ENCODE measurements at regions of chr2 and their contacts with region 1.

Region 1: GRCh38 chr2:27281855-27282559 is at the start of gene TRIM54:
- DNase-seq: no peak
- ATAC-seq: no peak
- H3K4me3 ChIP-seq: no peak within 1 kb of the TSS
- H3K27ac ChIP-seq: no peak within 1 kb of the TSS
- H3K4me1 ChIP-seq: no peaks in the 10 kb centered on the region
- H3K27me3 ChIP-seq: peaks cover 0 to 6% of the 10 kb centered on the region in 2 experiments; a peak in 2 of 4 replicates
- CTCF ChIP-seq: no peak
- EP300 ChIP-seq: no peak
- POLR2A ChIP-seq: no peak
- RAD21 ChIP-seq: no peak
- polyA plus RNA-seq, gene TRIM54: not detected

Region 2: GRCh38 chr2:26959331-26959730 is 322.7 kb before region 1 on chr2:
- CTCF ChIA-PET with region 1: interaction called, 46 read pairs
- POLR2A ChIA-PET with region 1: no interaction called
- RAD21 ChIA-PET with region 1: interaction called, 23 read pairs
- SMC1A ChIA-PET with region 1: interaction called, 21 read pairs
- in situ Hi-C with region 1: loop called (anchors 5 kb)
- intact Hi-C with region 1: loop called (anchors 2 kb)
- DNase-seq: no peak
- ATAC-seq: no peak
- H3K4me3 ChIP-seq: no peak overlapping the region
- H3K27ac ChIP-seq: no peak overlapping the region
- H3K4me1 ChIP-seq: no peaks in the 10 kb centered on the region
- H3K27me3 ChIP-seq: no peaks in the 10 kb centered on the region; a peak in 2 of 4 replicates
- CTCF ChIP-seq: no peak
- EP300 ChIP-seq: no peak
- POLR2A ChIP-seq: no peak
- RAD21 ChIP-seq: no peak

Region 3: GRCh38 chr2:27086090-27086723 is 195.8 kb before region 1 on chr2:
- CTCF ChIA-PET with region 1: interaction called, 21 read pairs
- POLR2A ChIA-PET with region 1: no interaction called
- RAD21 ChIA-PET with region 1: interaction called, 3 read pairs
- SMC1A ChIA-PET with region 1: interaction called, 5 read pairs
- in situ Hi-C with region 1: no loop called
- intact Hi-C with region 1: no loop called
- DNase-seq: peak; percentile 73
- ATAC-seq: peak; percentile 92
- H3K4me3 ChIP-seq: peak overlapping the region; percentile 85
- H3K27ac ChIP-seq: peak overlapping the region; percentile 67
- H3K4me1 ChIP-seq: peaks cover 19% of the 10 kb centered on the region
- H3K27me3 ChIP-seq: no peaks in the 10 kb centered on the region
- CTCF ChIP-seq: peak; percentile 77 to 95 (median 83)
- EP300 ChIP-seq: no peak
- POLR2A ChIP-seq: peak; percentile 80
- RAD21 ChIP-seq: peak; percentile 47

Region 4: DNA sequence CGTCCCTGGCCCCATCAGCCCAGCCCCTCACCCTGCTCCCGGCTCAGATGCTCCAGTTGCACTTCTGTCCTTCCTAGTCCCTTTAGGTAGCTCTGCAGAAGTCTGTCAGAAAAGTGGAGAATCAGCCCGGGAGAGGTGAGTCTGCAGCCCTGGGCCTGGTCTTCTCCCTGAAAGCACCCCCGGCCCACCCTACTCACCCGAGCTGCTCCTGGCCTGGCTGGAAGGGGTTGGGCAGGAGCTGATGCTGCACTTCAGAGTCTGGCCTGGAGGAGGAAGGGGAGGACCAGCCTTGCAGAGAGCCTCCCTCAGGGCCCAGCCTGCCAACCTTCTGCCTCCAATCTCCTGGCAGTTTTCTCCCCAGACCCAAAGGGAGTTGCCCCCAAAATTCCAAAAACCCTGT is 179.7 kb before region 1 on chr2:
- CTCF ChIA-PET with region 1: interaction called, 132 read pairs
- POLR2A ChIA-PET with region 1: no interaction called
- RAD21 ChIA-PET with region 1: interaction called, 39 read pairs
- SMC1A ChIA-PET with region 1: interaction called, 19 read pairs
- in situ Hi-C with region 1: loop called (anchors 5 kb)
- intact Hi-C with region 1: loop called (anchors 1 kb)
- DNase-seq: no peak
- ATAC-seq: no peak
- H3K4me3 ChIP-seq: no peak overlapping the region
- H3K27ac ChIP-seq: no peak overlapping the region
- H3K4me1 ChIP-seq: no peaks in the 10 kb centered on the region
- H3K27me3 ChIP-seq: no peaks in the 10 kb centered on the region
- CTCF ChIP-seq: no peak
- EP300 ChIP-seq: no peak
- POLR2A ChIP-seq: no peak
- RAD21 ChIP-seq: no peak

Region 5: GRCh38 chr2:27133905-27134780 is 147.9 kb before region 1 on chr2 and contains the start of gene PREB:
- CTCF ChIA-PET with region 1: interaction called, 12 read pairs
- POLR2A ChIA-PET with region 1: no interaction called
- RAD21 ChIA-PET with region 1: interaction called, 13 read pairs
- SMC1A ChIA-PET with region 1: interaction called, 5 read pairs
- in situ Hi-C with region 1: no loop called
- intact Hi-C with region 1: no loop called
- DNase-seq: peak; percentile 88
- ATAC-seq: peak; percentile 98
- H3K4me3 ChIP-seq: peak within 1 kb of the TSS; percentile 97
- H3K27ac ChIP-seq: peak within 1 kb of the TSS; percentile 90
- H3K4me1 ChIP-seq: peaks cover 8% of the 10 kb centered on the region
- H3K27me3 ChIP-seq: no peaks in the 10 kb centered on the region
- CTCF ChIP-seq: peak; percentile 38 to 43 (median 41); a peak in 4 of 6 replicates
- EP300 ChIP-seq: no peak
- POLR2A ChIP-seq: peak; percentile 89
- RAD21 ChIP-seq: peak; percentile 45; the same call in 1 of the 2 replicates
- polyA plus RNA-seq, gene PREB: 26.3 to 45.7 TPM

Region 6: GRCh38 chr2:27249891-27250651 is 31.9 kb before region 1 on chr2:
- CTCF ChIA-PET with region 1: interaction called, 58 read pairs
- POLR2A ChIA-PET with region 1: no interaction called
- RAD21 ChIA-PET with region 1: interaction called, 8 read pairs
- SMC1A ChIA-PET with region 1: interaction called, 12 read pairs
- in situ Hi-C with region 1: no loop called
- intact Hi-C with region 1: no loop called
- DNase-seq: no peak
- ATAC-seq: peak; percentile 88
- H3K4me3 ChIP-seq: no peak overlapping the region
- H3K27ac ChIP-seq: no peak overlapping the region
- H3K4me1 ChIP-seq: no peaks in the 10 kb centered on the region
- H3K27me3 ChIP-seq: peaks cover 2 to 4% of the 10 kb centered on the region in 2 experiments; a peak in 3 of 4 replicates
- CTCF ChIP-seq: peak; percentile 66 to 79 (median 66)
- EP300 ChIP-seq: no peak
- POLR2A ChIP-seq: no peak
- RAD21 ChIP-seq: peak; percentile 81

Measured in GM12878 (cell line).